RWPE1 (cell line): ENCODE measurements at regions of chr1 and their contacts with region 1.

Region 1: GRCh38 chr1:206663832-206664652 is 20.7 kb upstream of the MAPKAPK2 start:
- DNase-seq: peak; percentile 83
- H3K27ac ChIP-seq: no peak overlapping the region
- CTCF ChIP-seq: peak; percentile 81

Region 2: DNA sequence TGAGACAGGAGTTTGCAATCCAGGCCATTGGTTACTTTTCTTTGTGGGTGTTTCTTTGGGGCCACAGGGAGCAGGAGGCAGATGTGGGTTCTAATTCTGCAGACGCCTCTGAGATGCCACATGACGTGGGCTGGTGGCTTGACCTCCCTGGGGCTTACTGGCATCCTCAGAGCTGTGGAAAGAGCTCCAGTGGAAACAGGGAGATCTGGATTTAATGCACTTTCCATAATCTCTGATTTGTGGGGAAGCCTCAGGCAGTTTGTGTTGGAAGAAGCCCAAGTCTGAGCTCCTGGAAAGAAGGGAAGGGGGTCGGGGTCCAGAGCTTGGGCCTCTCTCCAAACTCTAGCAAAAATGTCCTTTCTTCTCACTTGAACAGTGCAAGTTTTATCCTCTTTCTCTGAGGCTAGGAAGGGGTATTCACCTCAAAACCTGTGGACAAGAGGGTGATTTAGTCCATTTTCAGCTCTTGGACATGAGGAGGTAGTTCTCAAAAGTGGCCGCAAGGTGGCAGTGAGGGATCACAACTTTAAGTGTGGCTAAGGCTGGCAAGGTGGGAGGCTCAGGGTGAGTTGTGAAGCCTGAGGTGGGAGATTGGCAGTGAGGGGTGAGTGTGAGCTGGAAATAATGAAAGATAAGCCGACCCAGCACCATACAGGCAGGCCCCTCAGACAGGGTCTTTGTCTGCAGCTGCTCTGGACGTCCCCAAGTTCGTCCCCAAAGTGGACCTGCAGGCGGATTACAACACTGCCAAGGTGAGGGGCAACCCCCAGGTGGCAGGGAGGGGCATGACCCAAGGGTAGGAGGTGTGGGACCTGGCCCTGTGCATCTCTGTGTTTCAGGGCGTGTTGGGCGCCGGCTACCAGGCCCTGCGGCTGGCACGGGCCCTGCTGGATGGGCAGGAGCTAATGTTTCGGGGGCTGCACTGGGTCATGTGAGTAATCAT is 184.6 kb before region 1 on chr1:
- CTCF ChIA-PET with region 1: interaction called, 24 read pairs
- POLR2A ChIA-PET with region 1: no interaction called
- DNase-seq: peak; percentile 92
- H3K27ac ChIP-seq: no peak overlapping the region
- CTCF ChIP-seq: peak; percentile 82

Region 3: GRCh38 chr1:206612129-206612876 is 51.7 kb before region 1 on chr1 and contains the start of gene EIF2D:
- CTCF ChIA-PET with region 1: interaction called, 18 read pairs
- POLR2A ChIA-PET with region 1: no interaction called
- DNase-seq: peak; percentile 100
- H3K27ac ChIP-seq: peak within 1 kb of the TSS; percentile 75
- CTCF ChIP-seq: peak; percentile 95

Region 4: GRCh38 chr1:206649261-206649921 is 14.7 kb before region 1 on chr1:
- CTCF ChIA-PET with region 1: interaction called, 32 read pairs
- POLR2A ChIA-PET with region 1: no interaction called
- DNase-seq: no peak
- H3K27ac ChIP-seq: no peak overlapping the region
- CTCF ChIP-seq: no peak

Region 5: DNA sequence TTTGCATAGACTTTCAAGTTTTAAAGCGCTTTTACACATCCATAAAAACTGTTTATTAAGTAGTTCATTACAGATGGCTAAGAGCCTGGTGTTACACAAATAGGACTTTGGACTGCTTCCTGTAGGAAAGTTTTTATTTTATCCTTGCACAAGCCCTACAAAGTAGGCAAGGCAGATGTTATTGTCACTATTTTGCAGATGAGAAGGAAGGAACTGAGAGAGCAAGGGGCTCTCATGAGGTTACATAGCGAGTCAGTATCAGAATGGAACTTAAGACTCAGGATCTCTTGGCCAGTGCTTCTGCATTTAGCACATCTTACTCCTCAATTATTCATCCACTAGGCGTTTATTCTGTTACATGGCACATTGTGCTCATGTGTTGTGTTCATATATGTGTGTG is 18.1 kb after region 1 on chr1:
- CTCF ChIA-PET with region 1: interaction called, 15 read pairs
- POLR2A ChIA-PET with region 1: no interaction called
- DNase-seq: no peak
- H3K27ac ChIP-seq: no peak overlapping the region
- CTCF ChIP-seq: no peak

Region 6: DNA sequence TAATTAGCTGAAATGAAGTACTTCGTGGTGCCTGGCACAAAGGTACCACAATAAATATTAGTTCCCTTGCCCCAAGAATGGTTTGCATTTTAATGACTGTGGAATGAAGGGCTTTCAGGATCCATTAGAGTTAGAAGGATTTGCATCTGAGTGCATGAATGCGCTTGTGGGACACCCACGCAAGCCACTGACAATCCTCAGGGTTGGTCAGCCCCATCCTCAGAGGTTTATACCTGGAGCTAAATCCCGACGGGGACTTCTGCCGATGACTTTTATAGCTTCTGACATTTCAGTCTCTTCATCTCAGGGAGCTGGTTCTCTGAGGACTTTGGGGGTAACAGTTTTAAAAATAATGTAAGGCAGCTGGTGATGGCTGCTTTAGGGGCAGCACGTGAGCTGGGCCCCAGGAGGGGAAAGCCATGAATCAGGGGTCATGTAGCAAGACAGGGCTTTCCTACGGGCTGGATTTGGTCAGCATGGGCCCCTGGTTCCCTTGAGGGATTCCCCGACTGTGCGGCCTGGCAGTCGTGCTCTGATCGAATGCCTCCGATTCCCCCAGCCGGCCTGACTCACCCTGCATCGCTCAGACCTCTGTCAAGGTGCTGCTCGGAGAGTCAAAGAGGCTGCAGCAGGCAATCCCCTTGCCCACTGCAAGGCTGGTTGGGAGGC is 129.0 kb after region 1 on chr1:
- CTCF ChIA-PET with region 1: no interaction called
- POLR2A ChIA-PET with region 1: no interaction called
- DNase-seq: no peak
- H3K27ac ChIP-seq: no peak overlapping the region
- CTCF ChIP-seq: no peak